ENCODE measurements at regions of chr11 and their contacts with region 1.

Region 1: DNA sequence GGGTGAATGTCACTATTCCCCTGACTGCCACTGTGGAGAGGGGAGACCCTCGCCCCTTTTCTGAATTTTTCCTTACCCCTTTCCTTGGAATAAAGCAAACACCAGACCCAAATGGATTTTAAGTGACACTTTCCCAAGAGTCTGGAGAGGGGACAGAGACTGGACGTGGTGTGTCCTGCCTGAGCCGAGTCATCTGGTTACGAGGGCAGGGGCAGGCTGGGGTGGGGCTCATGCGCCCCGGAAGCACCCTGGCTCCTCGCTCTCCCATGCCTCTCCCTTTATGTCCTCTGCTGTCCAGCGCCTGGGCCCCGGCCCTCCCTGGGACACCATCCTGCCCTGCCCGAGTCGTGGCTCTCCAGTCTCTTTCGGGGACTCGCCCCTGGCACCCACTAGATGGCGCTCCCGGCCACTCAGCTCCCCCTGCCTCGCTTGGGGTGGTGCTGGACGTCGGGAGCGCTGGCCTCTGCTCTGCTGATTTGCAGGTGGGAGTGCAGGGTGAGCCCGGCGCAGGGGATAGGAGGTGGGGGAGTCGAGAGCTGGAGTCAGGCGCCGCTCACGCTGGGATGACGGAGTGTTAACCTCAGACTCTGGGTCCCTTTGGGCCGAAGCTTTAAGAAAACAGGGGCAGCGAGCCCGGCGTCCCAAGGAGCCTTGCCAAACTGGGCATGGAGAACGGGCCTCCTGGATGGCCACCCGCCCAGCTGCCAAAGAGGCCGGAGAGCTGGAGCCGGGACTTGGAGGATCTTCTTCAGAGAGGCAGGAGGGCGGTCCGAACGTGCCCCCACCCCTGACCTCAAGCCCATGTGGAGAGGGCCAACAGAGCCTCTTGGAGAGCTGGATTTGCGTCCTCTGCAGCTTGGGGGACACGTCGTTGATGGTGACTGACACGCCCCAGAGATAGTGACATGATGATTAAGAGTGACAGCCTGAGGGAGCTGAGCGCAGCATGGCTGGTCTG is 89.9 kb downstream of the RPS6KA4 start:
- DNase-seq: peak; percentile 92
- ATAC-seq: peak; percentile 83
- H3K4me3 Mint-ChIP-seq: peak overlapping the region; percentile 76
- H3K27ac Mint-ChIP-seq: no peak overlapping the region
- H3K4me1 Mint-ChIP-seq: peaks cover 18% of the 10 kb centered on the region
- H3K27me3 Mint-ChIP-seq: peaks cover 68% of the 10 kb centered on the region
- CTCF ChIP-seq: peak; percentile 69

Region 2: DNA sequence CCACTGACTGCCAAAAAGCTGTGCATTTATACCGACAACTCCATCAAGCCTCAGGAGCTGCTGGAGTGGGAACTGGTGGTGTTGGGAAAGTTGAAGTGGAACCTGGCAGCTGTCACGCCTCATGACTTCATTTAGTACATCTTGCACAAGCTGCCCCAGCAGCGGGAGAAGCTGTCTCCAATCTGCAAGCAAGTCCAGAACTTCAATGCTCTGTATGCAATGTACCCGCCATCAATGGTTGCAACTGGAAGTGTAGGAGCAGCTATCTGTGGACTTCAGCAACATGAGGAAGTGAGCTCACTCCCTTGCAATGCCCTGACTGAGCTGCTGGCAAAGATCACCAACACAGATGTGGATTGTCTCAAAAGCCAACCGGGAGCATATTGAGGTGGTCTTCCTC is 1205.3 kb before region 1 on chr11 and contains the start of gene SLC22A25:
- CTCF ChIA-PET with region 1: no interaction called
- POLR2A ChIA-PET with region 1: no interaction called
- DNase-seq: no peak
- ATAC-seq: no peak
- H3K4me3 Mint-ChIP-seq: no peak within 1 kb of the TSS
- H3K27ac Mint-ChIP-seq: no peak within 1 kb of the TSS
- H3K4me1 Mint-ChIP-seq: peaks cover 6% of the 10 kb centered on the region
- H3K27me3 Mint-ChIP-seq: peaks cover 37% of the 10 kb centered on the region
- CTCF ChIP-seq: no peak
- total RNA-seq, gene SLC22A25: not detected in 3 replicates

Region 3: GRCh38 chr11:64348611-64349484 is 100.0 kb before region 1 on chr11:
- CTCF ChIA-PET with region 1: interaction called, 35 read pairs
- POLR2A ChIA-PET with region 1: no interaction called
- DNase-seq: no peak
- ATAC-seq: peak; percentile 27
- H3K4me3 Mint-ChIP-seq: no peak overlapping the region
- H3K27ac Mint-ChIP-seq: no peak overlapping the region
- H3K4me1 Mint-ChIP-seq: peaks cover 5% of the 10 kb centered on the region; the same call in 1 of the 2 replicates
- H3K27me3 Mint-ChIP-seq: no peaks in the 10 kb centered on the region
- CTCF ChIP-seq: no peak

Region 4: GRCh38 chr11:64409707-64410403 is 39.0 kb before region 1 on chr11:
- CTCF ChIA-PET with region 1: interaction called, 31 read pairs
- POLR2A ChIA-PET with region 1: no interaction called
- DNase-seq: no peak
- ATAC-seq: peak; percentile 16; the same call in 1 of the 2 replicates
- H3K4me3 Mint-ChIP-seq: no peak overlapping the region
- H3K27ac Mint-ChIP-seq: no peak overlapping the region
- H3K4me1 Mint-ChIP-seq: peaks cover 24% of the 10 kb centered on the region
- H3K27me3 Mint-ChIP-seq: peaks cover 18% of the 10 kb centered on the region
- CTCF ChIP-seq: no peak

Region 5: DNA sequence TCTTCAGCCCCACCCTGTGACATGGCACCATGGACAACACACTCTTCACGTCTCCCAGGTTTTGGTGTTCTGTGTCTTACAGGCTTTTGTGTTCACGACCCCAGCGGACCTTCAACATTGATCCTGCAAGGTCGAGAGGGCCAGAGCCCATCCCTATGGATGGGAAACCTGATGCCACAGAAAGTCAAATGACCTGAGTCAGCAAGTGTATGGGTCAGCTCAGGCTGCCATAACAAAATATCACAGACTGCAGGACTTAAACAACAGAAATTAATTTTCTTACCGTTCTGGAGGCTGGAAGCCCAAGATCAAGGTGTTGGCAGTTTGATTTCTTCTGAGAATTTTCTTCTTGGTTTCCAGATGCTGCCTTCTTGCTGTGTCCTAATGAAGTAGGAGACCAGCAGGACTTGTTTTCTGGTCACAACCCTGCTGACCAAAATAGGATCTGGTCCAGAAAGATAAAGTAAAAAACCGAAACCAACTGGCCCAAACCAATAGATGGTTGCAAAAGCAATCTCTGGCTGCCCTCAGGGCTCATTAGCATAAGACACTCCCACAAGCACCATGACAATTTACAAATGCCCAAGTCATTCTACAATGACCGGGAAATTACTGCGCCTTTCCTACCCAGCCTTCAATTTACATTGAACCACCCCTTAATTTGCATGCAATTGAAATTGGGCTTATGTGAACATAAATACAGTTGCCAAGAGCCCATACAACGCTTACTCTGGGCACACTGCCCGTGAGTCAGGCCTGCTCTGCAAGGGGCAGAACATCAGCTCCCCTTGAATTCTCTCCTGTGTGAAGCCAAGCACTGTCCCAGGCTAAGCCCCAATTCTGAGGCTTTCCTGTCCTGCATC is 23.9 kb after region 1 on chr11:
- CTCF ChIA-PET with region 1: interaction called, 18 read pairs
- POLR2A ChIA-PET with region 1: no interaction called
- DNase-seq: no peak
- ATAC-seq: no peak
- H3K4me3 Mint-ChIP-seq: no peak overlapping the region
- H3K27ac Mint-ChIP-seq: no peak overlapping the region
- H3K4me1 Mint-ChIP-seq: peaks cover 13% of the 10 kb centered on the region
- H3K27me3 Mint-ChIP-seq: peaks cover 37% of the 10 kb centered on the region
- CTCF ChIP-seq: no peak

Region 6: DNA sequence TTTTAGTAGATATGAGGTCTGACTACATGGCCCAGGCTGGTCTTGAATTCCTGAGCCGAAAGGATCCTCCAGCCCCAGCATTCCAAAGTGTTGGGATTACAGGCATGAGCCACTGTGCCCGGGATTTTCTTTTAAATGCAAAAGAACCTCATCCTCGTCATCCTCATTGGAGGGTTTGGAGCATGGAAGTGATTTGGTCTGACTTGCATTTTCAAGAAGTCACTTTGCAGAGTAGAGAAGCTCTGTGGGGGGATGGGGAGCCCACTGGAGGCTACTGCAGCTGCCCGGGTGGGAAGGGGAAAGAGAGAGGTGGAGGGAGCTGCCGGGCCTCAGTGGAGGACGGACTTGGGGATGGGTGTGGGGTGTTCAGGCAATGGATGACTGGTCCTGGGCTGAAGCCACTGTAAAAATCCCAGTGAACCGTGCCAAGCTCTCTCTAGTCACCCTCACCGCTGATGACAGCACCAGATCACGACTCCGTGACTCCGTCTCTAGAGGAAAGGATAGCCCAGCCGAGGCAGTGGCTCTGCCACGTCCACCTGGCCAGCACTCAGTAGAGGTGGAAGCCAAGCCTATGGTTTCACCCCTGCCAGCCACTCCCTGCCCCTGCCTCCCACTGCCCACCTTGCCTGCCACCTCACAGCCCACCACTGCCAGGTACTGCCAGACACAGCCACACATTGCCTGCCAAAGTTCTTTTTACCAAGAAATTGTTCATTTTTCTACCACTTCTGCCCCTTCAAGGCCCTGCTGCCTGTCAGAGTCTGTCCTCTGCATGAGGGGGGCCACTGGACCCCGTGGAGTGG is 109.4 kb after region 1 on chr11:
- CTCF ChIA-PET with region 1: interaction called, 12 read pairs
- POLR2A ChIA-PET with region 1: no interaction called
- DNase-seq: no peak
- ATAC-seq: peak; percentile 61
- H3K4me3 Mint-ChIP-seq: no peak overlapping the region
- H3K27ac Mint-ChIP-seq: peak overlapping the region; percentile 56
- H3K4me1 Mint-ChIP-seq: peaks cover 50% of the 10 kb centered on the region
- H3K27me3 Mint-ChIP-seq: peaks cover 6% of the 10 kb centered on the region
- CTCF ChIP-seq: no peak

Region 7: GRCh38 chr11:64652586-64653387 is 203.9 kb after region 1 on chr11:
- CTCF ChIA-PET with region 1: interaction called, 103 read pairs
- POLR2A ChIA-PET with region 1: interaction called, 3 read pairs
- DNase-seq: peak; percentile 97
- ATAC-seq: peak; percentile 79
- H3K4me3 Mint-ChIP-seq: peak overlapping the region; percentile 20; the same call in 1 of the 2 replicates
- H3K27ac Mint-ChIP-seq: no peak overlapping the region
- H3K4me1 Mint-ChIP-seq: peaks cover 12% of the 10 kb centered on the region
- H3K27me3 Mint-ChIP-seq: peaks cover 14% of the 10 kb centered on the region
- CTCF ChIP-seq: peak; percentile 80